HepG2 (cell line): ENCODE measurements at regions of chr20 and their contacts with region 1.

Region 1: GRCh38 chr20:45924391-45925261 is 9.9 kb upstream of the PCIF1 start:
- DNase-seq: peak; percentile 66
- ATAC-seq: peak; percentile 15
- H3K4me3 ChIP-seq: peak overlapping the region in 2 of 3 experiments; percentile 20 to 52; a peak in 2 of 6 replicates
- H3K27ac ChIP-seq: no peak overlapping the region
- H3K4me1 ChIP-seq: peaks cover 84% of the 10 kb centered on the region
- H3K27me3 ChIP-seq: no peaks in the 10 kb centered on the region; a peak in 1 of 5 replicates
- CTCF ChIP-seq: no peak
- EP300 ChIP-seq: no peak
- POLR2A ChIP-seq: no peak
- RAD21 ChIP-seq: peak; percentile 25; the same call in 1 of the 2 replicates

Region 2: DNA sequence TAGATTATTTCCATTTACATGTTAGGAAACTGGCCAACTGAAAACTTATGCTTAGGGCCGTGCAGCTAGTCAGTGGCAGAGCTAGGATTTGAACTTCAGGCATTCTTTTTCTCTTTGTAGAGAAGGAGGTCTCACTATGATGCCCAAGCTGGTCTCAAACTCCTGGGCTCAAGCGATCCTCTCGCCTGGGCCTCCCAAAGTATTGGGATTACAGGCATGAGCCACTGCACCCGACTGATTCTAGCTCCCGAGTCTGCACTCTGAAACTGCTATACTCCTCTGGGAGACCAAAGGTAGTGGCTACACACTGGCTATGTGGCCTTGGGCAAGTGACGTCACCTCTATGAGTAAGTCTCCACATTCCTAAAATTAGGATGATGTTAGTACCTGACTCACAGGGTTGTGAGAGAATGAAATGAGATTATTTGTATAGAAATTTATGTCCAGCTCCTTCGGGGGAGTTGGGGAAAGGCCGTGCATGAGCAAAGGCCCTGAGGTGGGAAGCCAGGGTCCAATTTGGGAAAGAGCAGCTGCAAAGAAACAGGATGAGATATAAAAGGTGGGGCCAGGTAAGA is 19.0 kb before region 1 on chr20:
- CTCF ChIA-PET with region 1: no interaction called
- POLR2A ChIA-PET with region 1: interaction called, 64 read pairs
- in situ Hi-C with region 1: no loop called
- intact Hi-C with region 1: loop called (anchors 2 kb)
- DNase-seq: peak; percentile 87
- ATAC-seq: peak; percentile 67
- H3K4me3 ChIP-seq: no peak overlapping the region
- H3K27ac ChIP-seq: peak overlapping the region; percentile 21
- H3K4me1 ChIP-seq: peaks cover 50% of the 10 kb centered on the region
- H3K27me3 ChIP-seq: no peaks in the 10 kb centered on the region
- CTCF ChIP-seq: no peak
- EP300 ChIP-seq: no peak
- POLR2A ChIP-seq: peak in 1 of 2 experiments; percentile 59; a peak in 2 of 4 replicates
- RAD21 ChIP-seq: no peak

Region 3: DNA sequence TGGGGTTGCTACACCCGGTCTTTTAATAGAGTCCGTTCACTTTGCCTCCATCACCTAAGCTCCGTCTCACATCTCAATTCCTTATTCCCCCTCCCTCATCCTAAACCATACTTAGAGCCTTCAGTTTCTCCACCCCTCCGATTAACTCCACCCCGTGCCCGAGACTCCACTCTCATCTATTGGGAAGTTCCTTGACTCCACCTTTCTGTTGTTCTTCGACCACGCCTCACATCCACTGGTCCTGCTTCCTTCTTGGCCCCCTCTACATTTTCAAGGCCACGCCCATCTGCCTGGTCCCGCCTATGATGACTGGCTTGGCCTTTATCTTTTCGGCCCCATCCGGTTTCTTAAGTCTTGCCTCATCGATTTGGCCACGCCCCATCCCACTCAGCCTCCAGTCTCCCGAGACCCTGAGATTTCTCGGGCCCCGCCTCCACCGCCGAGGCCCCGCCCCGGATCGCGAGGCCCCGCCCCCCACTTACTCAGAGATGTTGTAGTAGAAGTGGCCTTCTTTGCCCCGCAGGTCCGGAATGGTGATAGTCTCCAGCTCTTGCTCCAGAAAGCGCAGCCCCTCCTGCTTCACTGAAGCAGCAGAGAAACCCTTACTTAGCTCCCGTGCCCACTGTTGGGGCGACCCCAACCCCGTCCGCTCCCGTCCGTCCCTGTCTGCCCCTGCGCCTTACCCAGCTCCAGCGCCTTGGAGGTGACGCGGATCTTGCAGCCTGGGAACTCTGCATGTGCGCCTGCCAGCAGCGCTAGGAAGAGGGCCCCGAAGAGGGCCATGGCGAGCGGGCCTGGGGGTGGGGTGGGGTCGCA is 13.7 kb before region 1 on chr20:
- CTCF ChIA-PET with region 1: no interaction called
- POLR2A ChIA-PET with region 1: interaction called, 64 read pairs
- in situ Hi-C with region 1: no loop called
- intact Hi-C with region 1: loop called (anchors 2 kb)
- DNase-seq: no peak
- ATAC-seq: no peak
- H3K4me3 ChIP-seq: peak overlapping the region in 1 of 3 experiments; percentile 66; a peak in 1 of 6 replicates
- H3K27ac ChIP-seq: no peak overlapping the region
- H3K4me1 ChIP-seq: peaks cover 56% of the 10 kb centered on the region
- H3K27me3 ChIP-seq: peaks cover 0 to under 1% of the 10 kb centered on the region in 2 experiments; a peak in 2 of 5 replicates
- CTCF ChIP-seq: no peak
- EP300 ChIP-seq: no peak
- POLR2A ChIP-seq: no peak
- RAD21 ChIP-seq: no peak

Region 4: GRCh38 chr20:45946149-45946970 is 21.7 kb after region 1 on chr20:
- CTCF ChIA-PET with region 1: no interaction called
- POLR2A ChIA-PET with region 1: interaction called, 15 read pairs
- in situ Hi-C with region 1: no loop called
- intact Hi-C with region 1: no loop called
- DNase-seq: peak; percentile 97
- ATAC-seq: peak; percentile 83
- H3K4me3 ChIP-seq: no peak overlapping the region
- H3K27ac ChIP-seq: peak overlapping the region; percentile 65
- H3K4me1 ChIP-seq: peaks cover 30% of the 10 kb centered on the region
- H3K27me3 ChIP-seq: no peaks in the 10 kb centered on the region
- CTCF ChIP-seq: peak; percentile 46
- EP300 ChIP-seq: peak; percentile 64 to 80; a peak in 3 of 4 replicates
- POLR2A ChIP-seq: peak; percentile 2 to 37; a peak in 2 of 4 replicates
- RAD21 ChIP-seq: peak; percentile 12; the same call in 1 of the 2 replicates